Panc1 (cell line): ENCODE measurements at regions of chr19 and their contacts with region 1.

Region 1: GRCh38 chr19:19138169-19138981 is at the start of gene TMEM161A:
- DNase-seq: peak; percentile 92
- ATAC-seq: peak; percentile 100
- H3K4me3 ChIP-seq: peak within 1 kb of the TSS; percentile 83 to 86
- H3K27ac ChIP-seq: peak within 1 kb of the TSS; percentile 88
- H3K4me1 ChIP-seq: no peaks in the 10 kb centered on the region; the same call in 1 of the 2 replicates
- H3K27me3 ChIP-seq: no peaks in the 10 kb centered on the region
- CTCF ChIP-seq: no peak
- total RNA-seq, gene TMEM161A: 26.7 TPM

Region 2: GRCh38 chr19:19063183-19064097 is 74.9 kb before region 1 on chr19 and contains the start of gene SLC25A42:
- CTCF ChIA-PET with region 1: no interaction called
- POLR2A ChIA-PET with region 1: no interaction called
- in situ Hi-C with region 1: no loop called
- intact Hi-C with region 1: loop called (anchors 10 kb)
- DNase-seq: peak; percentile 95
- ATAC-seq: peak; percentile 95
- H3K4me3 ChIP-seq: peak within 1 kb of the TSS; percentile 52 to 61
- H3K27ac ChIP-seq: peak within 1 kb of the TSS; percentile 78
- H3K4me1 ChIP-seq: peaks cover 15% of the 10 kb centered on the region
- H3K27me3 ChIP-seq: no peaks in the 10 kb centered on the region
- CTCF ChIP-seq: no peak
- total RNA-seq, gene SLC25A42: 2.6 TPM